ENCODE measurements at regions of chr7 and their contacts with region 1.

Region 1: GRCh38 chr7:107743567-107744344 is at the start of gene CBLL1:
- DNase-seq: peak; percentile 100
- H3K4me3 Mint-ChIP-seq: peak within 1 kb of the TSS; percentile 91
- H3K27ac Mint-ChIP-seq: peak within 1 kb of the TSS; percentile 99
- H3K4me1 Mint-ChIP-seq: peaks cover 25% of the 10 kb centered on the region
- H3K27me3 Mint-ChIP-seq: peaks cover 1% of the 10 kb centered on the region
- total RNA-seq, gene CBLL1: 48.7 and 50.7 TPM in 2 replicates

Region 2: GRCh38 chr7:106112117-106112971 is 1631.4 kb before region 1 on chr7 and contains the start of gene SYPL1:
- intact Hi-C with region 1: loop called (anchors 5 kb)
- DNase-seq: peak; percentile 97
- H3K4me3 Mint-ChIP-seq: peak within 1 kb of the TSS; percentile 86
- H3K27ac Mint-ChIP-seq: peak within 1 kb of the TSS; percentile 92
- H3K4me1 Mint-ChIP-seq: peaks cover 44% of the 10 kb centered on the region
- H3K27me3 Mint-ChIP-seq: peaks cover 3% of the 10 kb centered on the region
- total RNA-seq, gene SYPL1: 26.6 and 27.2 TPM in 2 replicates

Region 3: GRCh38 chr7:107579885-107580715 is 163.7 kb before region 1 on chr7 and contains the start of gene BCAP29:
- intact Hi-C with region 1: loop called (anchors 5 kb)
- DNase-seq: peak; percentile 92
- H3K4me3 Mint-ChIP-seq: peak within 1 kb of the TSS; percentile 91
- H3K27ac Mint-ChIP-seq: peak within 1 kb of the TSS; percentile 91
- H3K4me1 Mint-ChIP-seq: peaks cover 25% of the 10 kb centered on the region
- H3K27me3 Mint-ChIP-seq: no peaks in the 10 kb centered on the region
- total RNA-seq, gene BCAP29: 43.6 and 52.0 TPM in 2 replicates

Region 4: GRCh38 chr7:107816011-107816566 is 72.3 kb after region 1 on chr7:
- intact Hi-C with region 1: loop called (anchors 1 kb)
- DNase-seq: no peak
- H3K4me3 Mint-ChIP-seq: peak overlapping the region; percentile 23
- H3K27ac Mint-ChIP-seq: peak overlapping the region; percentile 84
- H3K4me1 Mint-ChIP-seq: peaks cover 23% of the 10 kb centered on the region
- H3K27me3 Mint-ChIP-seq: peaks cover 3% of the 10 kb centered on the region

Region 5: GRCh38 chr7:107879400-107880035 is 135.8 kb after region 1 on chr7:
- intact Hi-C with region 1: loop called (anchors 1 kb)
- DNase-seq: peak; percentile 79
- H3K4me3 Mint-ChIP-seq: no peak overlapping the region
- H3K27ac Mint-ChIP-seq: no peak overlapping the region
- H3K4me1 Mint-ChIP-seq: peaks cover 15% of the 10 kb centered on the region
- H3K27me3 Mint-ChIP-seq: peaks cover 21% of the 10 kb centered on the region

Region 6: GRCh38 chr7:108063520-108063933 is 319.8 kb after region 1 on chr7:
- intact Hi-C with region 1: no loop called
- DNase-seq: no peak
- H3K4me3 Mint-ChIP-seq: no peak overlapping the region
- H3K27ac Mint-ChIP-seq: no peak overlapping the region
- H3K4me1 Mint-ChIP-seq: no peaks in the 10 kb centered on the region
- H3K27me3 Mint-ChIP-seq: peaks cover 2% of the 10 kb centered on the region

Region 7: GRCh38 chr7:108146070-108146837 is 402.5 kb after region 1 on chr7:
- intact Hi-C with region 1: loop called (anchors 5 kb)
- DNase-seq: peak; percentile 87
- H3K4me3 Mint-ChIP-seq: no peak overlapping the region
- H3K27ac Mint-ChIP-seq: no peak overlapping the region
- H3K4me1 Mint-ChIP-seq: no peaks in the 10 kb centered on the region
- H3K27me3 Mint-ChIP-seq: peaks cover 15% of the 10 kb centered on the region

Measured in activated CD4-positive, alpha-beta T cell treated with anti-CD3 and anti-CD28 coated beads, Interleukin-2, amount 10 ng/mL, durations not matched to agents 24 days and 14 days (primary cell).